ENCODE measurements at regions of chr10 and their contacts with region 1.

Region 1: GRCh38 chr10:117174439-117175214 is 22.7 kb upstream of the KCNK18 start:
- DNase-seq: peak; percentile 68
- H3K4me3 ChIP-seq: peak overlapping the region; percentile 17
- H3K27ac ChIP-seq: no peak overlapping the region
- H3K4me1 ChIP-seq: peaks cover 4% of the 10 kb centered on the region
- H3K27me3 ChIP-seq: peaks cover 16% of the 10 kb centered on the region
- CTCF ChIP-seq: peak; percentile 68 to 82 (median 72)
- POLR2A ChIP-seq: no peak

Region 2: DNA sequence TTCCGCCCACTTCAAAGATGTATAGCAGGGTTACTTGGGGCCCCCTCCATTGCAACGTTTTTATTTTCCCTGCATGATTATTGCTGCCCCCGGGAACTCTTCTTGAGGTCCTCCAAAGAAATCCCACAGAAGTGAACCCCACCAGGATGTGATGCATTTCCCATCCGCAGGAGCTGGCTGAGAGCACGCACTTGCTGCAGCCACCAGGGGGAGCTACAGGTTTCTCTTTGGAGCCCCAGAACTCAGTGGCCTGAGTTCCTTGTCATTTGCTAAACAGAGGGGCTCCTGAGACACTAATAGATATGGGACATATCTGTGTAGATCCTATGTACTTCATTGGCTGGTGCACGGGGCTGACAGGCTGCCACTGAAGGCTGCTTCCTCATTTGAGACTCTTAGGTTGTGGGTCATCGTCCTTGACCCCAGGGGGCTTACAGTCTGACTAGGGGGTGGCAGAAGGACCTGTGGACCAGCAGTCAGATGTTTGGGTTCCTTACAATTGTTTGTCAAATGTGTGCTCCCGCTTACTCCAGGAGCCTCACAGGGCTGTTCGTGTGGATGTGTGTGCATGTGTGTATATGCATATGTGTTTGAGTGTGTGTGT is 377.6 kb before region 1 on chr10:
- intact Hi-C with region 1: loop called (anchors 2 kb)
- DNase-seq: peak; percentile 56
- H3K4me3 ChIP-seq: no peak overlapping the region
- H3K27ac ChIP-seq: no peak overlapping the region
- H3K4me1 ChIP-seq: no peaks in the 10 kb centered on the region
- H3K27me3 ChIP-seq: no peaks in the 10 kb centered on the region
- CTCF ChIP-seq: peak; percentile 89 to 93 (median 90)
- POLR2A ChIP-seq: no peak

Measured in prostate gland (tissue), 2 donors.